Heart right ventricle (tissue), 16 donors: ENCODE measurements at regions of chr12 and their contacts with region 1.

Region 1: DNA sequence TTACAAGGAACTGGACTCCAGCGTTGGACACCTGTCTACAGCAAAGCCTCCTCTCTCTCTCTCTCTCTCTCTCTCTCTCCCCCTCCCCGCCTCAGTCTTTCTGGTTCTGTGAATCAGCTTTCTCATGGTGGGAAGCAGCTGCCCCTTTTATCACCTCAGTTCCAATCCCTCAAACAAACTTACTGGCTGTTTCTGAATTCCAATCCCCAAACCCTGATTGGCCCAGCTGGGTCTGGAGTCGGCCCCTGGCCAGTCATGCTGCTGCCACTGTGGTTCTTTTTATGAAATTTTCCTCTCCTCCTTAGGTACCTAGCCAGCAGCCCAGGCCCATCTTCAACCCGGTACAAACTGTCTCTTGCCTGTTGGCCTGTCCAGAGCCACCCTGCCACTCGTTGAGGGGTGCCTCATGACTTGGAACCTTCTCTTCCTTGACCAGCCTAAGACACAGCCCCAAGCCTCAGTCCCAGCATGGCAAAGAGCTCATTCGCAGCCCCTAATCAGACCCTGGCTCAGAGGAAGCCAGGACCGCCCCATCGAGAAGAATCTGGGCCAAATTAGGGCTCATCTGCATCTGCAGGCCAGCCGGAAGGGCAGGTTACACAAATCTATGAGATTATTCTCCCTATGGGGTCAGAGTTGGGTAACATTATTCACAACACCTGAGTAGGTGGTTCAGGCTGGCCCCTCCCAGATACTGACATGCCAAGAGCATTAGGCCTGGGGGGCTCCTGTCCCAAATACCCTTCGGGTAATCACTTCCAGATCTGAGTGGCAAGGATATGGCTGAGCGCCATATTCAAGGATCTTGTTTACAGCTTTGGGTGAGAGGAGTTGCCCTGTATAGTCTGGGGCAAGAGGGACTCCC is 9.5 kb upstream of the MORN3 start:
- DNase-seq: no peak
- ATAC-seq: no peak
- H3K4me3 ChIP-seq: no peak overlapping the region
- H3K27ac ChIP-seq: no peak overlapping the region
- H3K4me1 ChIP-seq: peaks cover 0 to 9% (median 0%) of the 10 kb centered on the region in 9 donors
- H3K27me3 ChIP-seq: no peaks in the 10 kb centered on the region
- CTCF ChIP-seq: no peak

Region 2: DNA sequence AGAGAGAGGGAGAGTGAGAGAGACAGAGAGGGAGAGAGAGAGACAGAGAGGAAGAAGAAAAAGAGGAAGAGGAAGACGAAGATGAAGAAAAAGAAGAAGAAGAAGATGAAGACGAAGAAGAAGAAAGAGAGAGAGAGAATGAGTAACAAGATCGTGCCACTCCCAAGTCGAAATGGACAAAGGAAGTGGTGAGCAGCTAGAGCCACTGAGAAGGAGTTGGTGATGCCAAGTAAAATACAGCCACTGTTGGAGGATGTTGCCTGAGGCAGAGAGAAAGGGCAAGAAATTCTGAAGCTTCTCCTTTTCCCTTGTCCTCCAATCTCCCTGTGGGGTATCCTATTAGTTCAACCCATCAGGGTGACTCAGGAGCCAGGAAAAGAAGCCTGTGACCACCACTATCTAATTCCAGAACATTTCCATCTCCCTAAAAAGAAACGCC is 314.2 kb before region 1 on chr12:
- intact Hi-C with region 1: no loop called
- DNase-seq: no peak
- ATAC-seq: no peak
- H3K4me3 ChIP-seq: no peak overlapping the region
- H3K27ac ChIP-seq: no peak overlapping the region
- H3K4me1 ChIP-seq: no peaks in the 10 kb centered on the region
- H3K27me3 ChIP-seq: peaks cover 0 to 30% (median 6%) of the 10 kb centered on the region in 7 donors
- CTCF ChIP-seq: no peak

Region 3: GRCh38 chr12:121494093-121494787 is 184.7 kb before region 1 on chr12:
- intact Hi-C with region 1: loop called in 2 of 10 experiments (anchors 2 to 5 kb)
- DNase-seq: peak; percentile 16 to 47
- ATAC-seq: peak in 3 of 8 donors; percentile 39 to 60 (median 43)
- H3K4me3 ChIP-seq: no peak overlapping the region
- H3K27ac ChIP-seq: no peak overlapping the region
- H3K4me1 ChIP-seq: peaks cover 0 to 24% (median 0%) of the 10 kb centered on the region in 9 donors
- H3K27me3 ChIP-seq: no peaks in the 10 kb centered on the region
- CTCF ChIP-seq: peak; percentile 56 to 87 (median 72)

Region 4: GRCh38 chr12:121499929-121500793 is 178.8 kb before region 1 on chr12:
- intact Hi-C with region 1: loop called in 8 of 10 experiments (anchors 1 to 5 kb)
- DNase-seq: peak; percentile 79 to 81
- ATAC-seq: peak; percentile 81 to 93 (median 88)
- H3K4me3 ChIP-seq: peak overlapping the region in 9 of 10 donors; percentile 10 to 45 (median 36)
- H3K27ac ChIP-seq: peak overlapping the region in 9 of 10 donors; percentile 50 to 85 (median 78)
- H3K4me1 ChIP-seq: peaks cover 0 to 28% (median 12%) of the 10 kb centered on the region in 9 donors
- H3K27me3 ChIP-seq: no peaks in the 10 kb centered on the region
- CTCF ChIP-seq: peak; percentile 96 to 99 (median 99)

Region 5: GRCh38 chr12:121550974-121551634 is 127.8 kb before region 1 on chr12:
- intact Hi-C with region 1: loop called (anchors 1 to 5 kb)
- DNase-seq: no peak
- ATAC-seq: no peak
- H3K4me3 ChIP-seq: no peak overlapping the region
- H3K27ac ChIP-seq: no peak overlapping the region
- H3K4me1 ChIP-seq: peaks cover 0 to 13% (median 0%) of the 10 kb centered on the region in 9 donors
- H3K27me3 ChIP-seq: no peaks in the 10 kb centered on the region
- CTCF ChIP-seq: no peak

Region 6: DNA sequence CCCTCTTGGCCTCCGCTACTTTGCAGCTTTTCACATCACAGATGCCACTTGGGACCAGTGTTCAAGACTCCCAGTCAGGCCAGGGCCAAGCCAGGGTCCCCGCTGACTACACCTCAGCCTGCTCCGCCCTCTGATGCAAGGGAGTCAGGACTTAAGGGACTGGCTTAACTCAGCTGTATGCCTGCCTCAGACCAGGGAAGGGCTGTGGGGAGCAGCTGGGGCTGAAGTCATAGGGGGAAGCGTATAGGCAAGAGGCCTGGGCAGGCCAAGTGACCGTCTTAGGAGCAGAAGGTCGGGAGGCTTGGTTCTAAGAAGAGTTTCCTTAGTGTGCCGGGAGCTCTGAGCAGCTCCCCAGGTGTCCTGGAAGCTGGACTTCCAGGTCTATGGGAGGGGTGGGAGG is 120.0 kb before region 1 on chr12:
- intact Hi-C with region 1: loop called in 3 of 10 experiments (anchors 5 kb)
- DNase-seq: no peak
- ATAC-seq: peak in 1 of 8 donors; percentile 52
- H3K4me3 ChIP-seq: no peak overlapping the region
- H3K27ac ChIP-seq: no peak overlapping the region
- H3K4me1 ChIP-seq: peaks cover 0 to 7% (median 0%) of the 10 kb centered on the region in 9 donors
- H3K27me3 ChIP-seq: no peaks in the 10 kb centered on the region
- CTCF ChIP-seq: no peak

Region 7: GRCh38 chr12:121802846-121803630 is 124.1 kb after region 1 on chr12:
- intact Hi-C with region 1: no loop called
- DNase-seq: peak; percentile 89 to 92
- ATAC-seq: peak; percentile 15 to 70 (median 58)
- H3K4me3 ChIP-seq: peak overlapping the region; percentile 54 to 87 (median 74)
- H3K27ac ChIP-seq: peak overlapping the region; percentile 98 to 100 (median 100)
- H3K4me1 ChIP-seq: peaks cover 25 to 55% (median 43%) of the 10 kb centered on the region in 9 donors
- H3K27me3 ChIP-seq: no peaks in the 10 kb centered on the region
- CTCF ChIP-seq: no peak

Region 8: DNA sequence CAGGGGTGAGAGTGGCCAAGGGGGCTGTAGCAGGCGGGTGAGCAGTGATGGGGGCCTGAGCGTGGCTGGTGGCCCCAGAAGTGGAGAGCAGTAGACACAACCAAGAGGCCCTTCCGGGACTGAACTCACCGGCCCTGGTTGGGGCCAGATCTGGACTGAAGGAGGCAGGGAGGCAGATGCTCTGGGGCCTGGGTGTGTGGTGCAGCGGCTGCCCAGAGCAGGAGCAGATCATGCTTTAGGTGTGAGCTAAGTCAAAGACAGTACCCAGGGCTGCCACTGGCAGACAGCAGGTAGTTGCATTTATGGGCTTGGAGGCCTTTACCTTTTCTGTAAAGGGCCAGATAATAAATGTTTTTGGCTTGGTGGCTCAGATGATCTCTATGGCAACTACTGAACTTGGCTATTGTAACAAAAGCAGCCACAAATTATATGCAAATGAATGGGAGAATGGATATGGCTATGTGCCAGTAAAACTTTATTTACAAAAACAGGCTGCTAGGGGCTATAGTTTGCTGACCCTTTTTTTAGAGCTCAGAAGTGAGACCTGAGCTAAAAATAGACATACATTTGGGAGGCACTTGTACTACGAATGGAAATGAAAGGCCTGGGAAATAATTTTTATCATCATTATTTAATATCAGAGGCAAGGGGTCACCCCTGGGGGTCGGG is 150.4 kb after region 1 on chr12:
- intact Hi-C with region 1: no loop called
- DNase-seq: no peak
- ATAC-seq: peak in 2 of 8 donors; percentile 10 to 30
- H3K4me3 ChIP-seq: no peak overlapping the region
- H3K27ac ChIP-seq: peak overlapping the region in 4 of 10 donors; percentile 5 to 65 (median 48)
- H3K4me1 ChIP-seq: peaks cover 0 to 12% (median 6%) of the 10 kb centered on the region in 9 donors
- H3K27me3 ChIP-seq: no peaks in the 10 kb centered on the region
- CTCF ChIP-seq: no peak